ENCODE measurements at regions of chr19 and their contacts with region 1.

Region 1: DNA sequence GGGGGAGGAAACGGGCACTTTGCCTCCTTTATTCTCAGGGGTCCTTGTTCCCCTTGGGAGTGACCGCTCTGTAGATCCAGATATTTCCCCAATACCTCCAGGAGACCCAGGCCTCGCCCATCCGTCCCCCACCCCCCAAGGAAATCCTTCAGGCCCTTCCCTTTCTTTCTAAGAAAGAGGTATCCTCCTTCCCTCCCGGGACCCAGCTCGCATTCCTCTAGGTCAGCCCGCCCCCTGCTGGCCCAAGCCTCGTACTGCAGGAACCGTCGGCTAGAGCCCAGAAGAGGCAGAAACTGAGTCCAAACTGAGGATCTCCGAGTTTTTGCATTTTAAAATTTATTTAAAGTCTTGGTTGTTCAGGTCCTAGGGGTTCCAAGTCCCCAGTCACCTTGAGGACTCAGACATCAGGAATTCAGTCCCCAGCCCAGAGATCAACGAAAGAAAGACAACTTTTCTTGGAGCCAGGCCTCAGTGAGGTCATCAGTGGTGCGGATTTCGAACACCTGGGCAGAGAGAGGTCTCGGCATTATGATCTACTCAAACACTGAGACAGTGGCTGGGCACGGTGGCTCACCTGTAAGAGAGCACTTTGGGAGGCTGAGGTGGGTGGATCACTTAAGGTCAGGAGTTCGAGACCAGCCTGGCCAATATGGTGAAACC is 7.5 kb upstream of the LRFN1 start:
- DNase-seq: no peak
- ATAC-seq: peak; percentile 80
- H3K4me3 ChIP-seq: no peak overlapping the region
- H3K27ac ChIP-seq: no peak overlapping the region
- H3K4me1 ChIP-seq: peaks cover 8% of the 10 kb centered on the region
- H3K27me3 ChIP-seq: no peaks in the 10 kb centered on the region
- CTCF ChIP-seq: peak; percentile 92 to 95 (median 92)
- EP300 ChIP-seq: no peak
- POLR2A ChIP-seq: no peak
- RAD21 ChIP-seq: peak; percentile 93

Region 2: GRCh38 chr19:39212375-39212742 is 115.8 kb before region 1 on chr19:
- CTCF ChIA-PET with region 1: interaction called, 28 read pairs
- POLR2A ChIA-PET with region 1: no interaction called
- RAD21 ChIA-PET with region 1: no interaction called
- SMC1A ChIA-PET with region 1: interaction called, 4 read pairs
- in situ Hi-C with region 1: no loop called
- intact Hi-C with region 1: loop called (anchors 5 kb)
- DNase-seq: peak; percentile 2
- ATAC-seq: peak; percentile 83
- H3K4me3 ChIP-seq: no peak overlapping the region
- H3K27ac ChIP-seq: no peak overlapping the region
- H3K4me1 ChIP-seq: no peaks in the 10 kb centered on the region
- H3K27me3 ChIP-seq: peaks cover 0 to 3% of the 10 kb centered on the region in 2 experiments; a peak in 1 of 4 replicates
- CTCF ChIP-seq: peak; percentile 49 to 56 (median 55); a peak in 5 of 6 replicates
- EP300 ChIP-seq: no peak
- POLR2A ChIP-seq: no peak
- RAD21 ChIP-seq: peak; percentile 53

Measured in GM12878 (cell line).